Motor neuron (in vitro differentiated cells): ENCODE measurements at regions of chr11 and their contacts with region 1.

Region 1: GRCh38 chr11:19071255-19071654 is 10.7 kb upstream of the MRGPRX2 start:
- ATAC-seq: peak; percentile 81 to 100 (median 90)
- H3K4me3 ChIP-seq: no peak overlapping the region
- H3K27ac ChIP-seq: no peak overlapping the region
- H3K4me1 ChIP-seq: no peaks in the 10 kb centered on the region

Region 2: DNA sequence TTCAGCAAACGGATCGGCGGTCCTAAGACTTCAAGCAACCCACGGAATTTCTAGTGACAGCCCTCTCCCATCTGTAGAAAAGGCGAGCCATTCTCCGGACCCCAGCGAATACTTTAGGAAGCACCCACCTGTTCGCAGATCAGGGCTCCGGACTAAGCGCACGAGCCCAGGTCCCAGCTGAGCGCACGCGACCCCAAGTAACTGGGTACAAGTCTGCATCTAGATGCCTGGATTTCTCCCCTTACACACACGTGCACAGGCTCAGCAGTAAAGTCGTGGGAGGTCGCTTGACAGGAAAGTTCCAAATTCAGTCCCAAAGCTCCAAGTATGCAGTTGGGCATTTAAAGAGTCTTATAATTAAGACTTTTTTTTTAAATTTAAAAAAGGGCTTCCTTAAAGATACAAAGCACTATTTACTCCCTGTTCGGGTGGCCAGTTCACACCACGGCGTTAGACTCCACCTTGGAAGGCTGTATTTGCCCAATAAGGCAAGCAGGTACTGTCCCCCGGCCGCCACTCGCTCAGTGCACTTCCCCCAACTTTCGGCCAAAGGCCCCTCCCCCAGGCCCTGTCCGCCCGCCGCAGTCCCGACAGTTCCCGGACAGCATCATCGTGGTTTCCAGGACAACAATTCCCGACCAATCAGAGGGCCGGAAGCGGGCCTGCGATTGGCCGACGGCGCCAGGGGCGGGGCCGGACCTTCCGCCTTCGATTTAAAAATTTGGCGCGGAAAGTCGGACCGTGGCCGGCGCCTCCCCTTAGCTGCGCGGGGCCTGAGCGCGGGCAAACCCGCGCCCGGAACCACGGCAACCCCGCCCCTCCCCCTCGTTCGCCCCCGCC is 169.4 kb after region 1 on chr11 and contains the start of gene E2F8:
- in situ Hi-C with region 1: loop called in 1 of 9 experiments (anchors 25 kb)
- ATAC-seq: peak; percentile 94 to 100 (median 98)
- H3K4me3 ChIP-seq: peak within 1 kb of the TSS; percentile 46 to 62 (median 55)
- H3K27ac ChIP-seq: no peak within 1 kb of the TSS
- H3K4me1 ChIP-seq: peaks cover 3 to 10% of the 10 kb centered on the region in 2 donors
- total RNA-seq, gene E2F8: 0.11 to 6.9 (median 1.1) TPM in 7 of 8 experiments, not detected in the other

Region 3: DNA sequence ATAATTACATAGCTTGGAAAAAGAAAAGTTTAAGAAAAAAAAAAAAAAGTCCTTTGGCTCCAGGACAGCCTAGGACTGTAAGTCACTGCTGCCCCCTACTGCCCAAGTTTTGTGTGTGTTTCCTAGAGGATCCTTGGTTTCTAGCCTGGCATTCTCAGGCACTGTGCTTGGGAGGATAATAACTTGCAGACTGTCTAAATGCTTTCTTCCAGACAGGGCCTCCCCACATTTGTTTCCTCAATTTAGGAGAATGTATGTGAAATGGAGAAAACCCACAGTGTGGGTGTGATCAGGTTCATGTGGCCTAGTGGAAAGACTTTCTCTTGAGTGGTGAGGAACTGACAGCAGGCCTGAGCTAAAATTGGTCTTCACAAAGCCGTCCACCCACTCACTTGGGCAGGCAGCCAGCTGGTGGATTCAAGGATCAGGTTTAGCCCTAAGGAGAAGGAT is 832.4 kb after region 1 on chr11:
- in situ Hi-C with region 1: loop called in 2 of 9 experiments (anchors 25 kb)
- ATAC-seq: peak; percentile 72 to 91 (median 80)
- H3K4me3 ChIP-seq: no peak overlapping the region
- H3K27ac ChIP-seq: no peak overlapping the region
- H3K4me1 ChIP-seq: peaks cover 0 to 8% of the 10 kb centered on the region in 2 donors